Right cardiac atrium (tissue), 5 donors: ENCODE measurements at regions of chr17 and their contacts with region 1.

Region 1: DNA sequence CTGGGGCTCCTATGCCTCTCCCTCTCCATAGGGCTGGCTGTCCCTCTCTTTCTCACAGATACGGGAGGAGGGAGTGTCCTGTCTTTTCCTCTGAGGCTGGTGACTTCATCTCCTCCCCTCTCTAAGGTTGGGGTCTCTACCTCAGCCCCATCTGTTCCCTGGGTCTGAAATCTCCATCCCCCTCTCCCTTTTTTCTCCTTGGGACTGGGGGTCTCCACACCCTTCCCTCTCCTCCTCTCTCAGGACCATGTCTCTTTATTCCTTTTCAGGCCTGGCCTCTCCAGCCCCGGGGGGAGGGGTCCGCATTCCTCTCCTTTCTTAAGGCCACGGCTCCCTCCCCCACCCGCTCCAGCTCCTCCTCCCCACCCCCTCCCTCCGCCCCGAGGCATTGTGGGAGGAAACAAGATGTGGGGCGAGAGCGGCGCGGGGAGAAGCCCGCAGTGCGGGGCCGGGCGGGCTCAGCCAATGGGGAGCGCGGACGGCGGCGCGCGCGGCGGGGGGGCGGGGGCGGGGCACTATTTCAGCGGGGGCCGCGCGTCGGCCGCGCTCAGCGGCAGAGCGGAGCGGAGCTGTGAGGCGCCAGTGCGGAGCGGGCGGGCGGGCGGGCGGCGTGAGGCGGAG is at the start of gene DYNLL2:
- DNase-seq: peak; percentile 96 to 98 (median 98)
- ATAC-seq: peak; percentile 95
- H3K4me3 ChIP-seq: peak within 1 kb of the TSS; percentile 91
- H3K27ac ChIP-seq: peak within 1 kb of the TSS; percentile 97
- H3K4me1 ChIP-seq: peaks cover 7% of the 10 kb centered on the region
- H3K27me3 ChIP-seq: no peaks in the 10 kb centered on the region
- total RNA-seq, gene DYNLL2: 58.1 to 73.0 (median 67.4) TPM

Region 2: DNA sequence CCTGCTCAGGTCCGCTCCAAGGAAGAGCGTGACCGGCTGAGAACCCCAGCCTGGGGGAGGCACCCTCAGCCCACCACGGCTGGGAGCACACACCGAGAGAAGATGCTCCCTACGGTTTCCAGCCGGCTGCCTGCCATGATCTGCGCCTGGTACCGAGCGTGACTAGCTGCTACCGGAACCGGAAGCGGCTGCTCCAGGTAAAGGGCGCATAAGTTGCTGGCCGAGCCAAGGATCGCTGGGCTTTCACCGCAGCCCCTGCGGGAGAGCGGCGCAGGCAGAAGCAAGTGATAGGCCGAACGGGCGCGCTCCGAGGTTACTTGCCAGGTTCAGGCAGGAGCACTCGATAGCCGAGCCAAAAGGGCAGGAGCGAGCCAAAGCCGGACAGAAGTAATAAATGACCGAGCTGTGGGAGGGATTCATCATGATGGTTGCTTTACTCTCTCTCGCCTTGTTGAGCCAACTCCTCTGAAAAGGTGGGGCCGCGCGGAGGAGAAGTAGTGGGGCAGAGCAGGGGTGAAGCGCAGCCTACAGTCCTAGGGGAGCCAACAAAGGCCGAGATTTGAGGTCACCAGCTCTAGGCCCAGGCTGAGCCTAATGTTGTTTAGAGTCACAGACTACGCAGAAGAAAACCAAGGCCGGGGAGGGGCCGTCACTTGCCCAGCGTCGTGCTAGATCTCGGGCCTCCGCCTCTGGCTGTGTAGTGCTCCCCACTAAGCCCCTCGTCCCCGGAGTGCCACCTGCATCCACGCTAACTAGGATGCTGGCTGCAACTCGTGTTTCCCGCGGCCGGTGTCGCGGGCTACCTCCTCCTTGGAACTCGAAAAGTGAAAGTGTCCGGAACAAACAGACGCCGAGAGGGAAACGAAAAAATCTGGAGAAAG is 232.9 kb before region 1 on chr17 and contains the start of gene MRPS23:
- intact Hi-C with region 1: loop called in 1 of 4 experiments (anchors 10 kb)
- DNase-seq: peak; percentile 99
- ATAC-seq: peak; percentile 88 to 94
- H3K4me3 ChIP-seq: peak within 1 kb of the TSS; percentile 90
- H3K27ac ChIP-seq: peak within 1 kb of the TSS; percentile 99
- H3K4me1 ChIP-seq: peaks cover 6% of the 10 kb centered on the region
- H3K27me3 ChIP-seq: no peaks in the 10 kb centered on the region
- total RNA-seq, gene MRPS23: 50.9 to 68.3 (median 61.1) TPM

Region 3: GRCh38 chr17:57868007-57868909 is 214.7 kb before region 1 on chr17:
- intact Hi-C with region 1: loop called in 2 of 4 experiments (anchors 10 kb)
- DNase-seq: peak; percentile 89 to 92 (median 92)
- ATAC-seq: peak; percentile 84 to 88
- H3K4me3 ChIP-seq: no peak overlapping the region
- H3K27ac ChIP-seq: peak overlapping the region; percentile 34
- H3K4me1 ChIP-seq: peaks cover 6% of the 10 kb centered on the region
- H3K27me3 ChIP-seq: no peaks in the 10 kb centered on the region

Region 4: GRCh38 chr17:58006924-58007780 is 75.8 kb before region 1 on chr17 and contains the start of gene SRSF1:
- intact Hi-C with region 1: loop called (anchors 5 to 10 kb)
- DNase-seq: peak; percentile 98 to 99 (median 99)
- ATAC-seq: peak; percentile 97
- H3K4me3 ChIP-seq: peak within 1 kb of the TSS; percentile 78
- H3K27ac ChIP-seq: peak within 1 kb of the TSS; percentile 94
- H3K4me1 ChIP-seq: no peaks in the 10 kb centered on the region
- H3K27me3 ChIP-seq: no peaks in the 10 kb centered on the region
- total RNA-seq, gene SRSF1: 97.9 to 132 (median 126) TPM

Region 5: DNA sequence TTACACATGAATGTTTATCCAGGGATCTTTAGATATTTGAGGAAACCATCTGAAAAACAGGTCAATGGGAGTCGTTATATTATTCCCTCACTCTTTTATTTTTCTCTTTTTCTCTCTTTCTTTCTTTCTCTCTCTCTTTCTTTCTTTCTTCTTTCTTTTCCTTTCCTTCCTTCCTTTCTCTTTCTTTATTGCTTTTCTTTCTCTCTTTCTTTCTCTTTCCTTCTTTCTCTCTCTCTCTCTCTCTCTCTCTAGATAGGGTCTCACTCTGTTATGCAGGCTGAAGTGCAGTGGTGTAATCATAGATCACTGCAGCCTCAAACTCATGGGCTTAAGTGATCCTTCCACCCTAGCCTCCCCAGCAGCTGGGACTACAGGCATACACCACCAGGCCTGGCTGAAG is 44.9 kb after region 1 on chr17:
- intact Hi-C with region 1: no loop called
- DNase-seq: no peak
- ATAC-seq: no peak
- H3K4me3 ChIP-seq: no peak overlapping the region
- H3K27ac ChIP-seq: no peak overlapping the region
- H3K4me1 ChIP-seq: no peaks in the 10 kb centered on the region
- H3K27me3 ChIP-seq: peaks cover 3% of the 10 kb centered on the region